GM23248 (cell line): ENCODE measurements at regions of chr11 and their contacts with region 1.

Region 1: DNA sequence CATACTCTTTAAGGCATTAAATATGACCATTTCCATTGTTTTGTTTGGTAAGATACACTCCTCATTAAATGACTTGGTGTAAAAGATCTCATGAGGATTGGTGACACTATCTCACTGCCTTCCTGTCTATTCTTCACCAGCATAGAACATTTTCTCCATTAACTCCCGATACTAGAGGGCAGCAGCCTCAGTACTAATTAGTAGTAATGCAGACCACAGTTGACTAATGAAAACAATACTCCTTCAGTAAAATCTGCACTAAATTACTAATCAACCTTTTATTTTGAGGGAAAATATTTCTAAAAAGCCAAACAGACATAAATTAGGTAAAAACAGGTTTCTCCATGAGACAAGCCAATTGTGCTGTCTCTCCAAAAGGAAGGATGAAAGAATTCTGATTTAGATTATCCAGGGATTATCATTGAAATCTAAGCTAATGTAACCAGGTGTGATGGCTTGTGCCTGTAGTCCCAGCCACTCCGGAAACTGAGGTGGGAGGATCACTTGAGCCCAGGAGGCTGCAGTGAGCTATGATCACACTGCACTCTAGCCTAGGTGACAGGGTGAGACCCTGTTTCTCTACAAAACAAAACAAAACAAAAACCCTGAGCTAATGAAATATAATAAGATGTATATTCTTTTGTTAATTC is 9.4 kb downstream of the PGM2L1 start:
- DNase-seq: peak; percentile 72
- H3K4me3 ChIP-seq: no peak overlapping the region
- H3K27ac ChIP-seq: no peak overlapping the region
- H3K4me1 ChIP-seq: no peaks in the 10 kb centered on the region
- H3K27me3 ChIP-seq: no peaks in the 10 kb centered on the region

Region 2: GRCh38 chr11:73939096-73939495 is 449.7 kb before region 1 on chr11:
- in situ Hi-C with region 1: no loop called
- DNase-seq: peak; percentile 15
- H3K4me3 ChIP-seq: no peak overlapping the region
- H3K27ac ChIP-seq: no peak overlapping the region
- H3K4me1 ChIP-seq: no peaks in the 10 kb centered on the region
- H3K27me3 ChIP-seq: no peaks in the 10 kb centered on the region

Region 3: GRCh38 chr11:74434528-74434927 is 45.7 kb after region 1 on chr11:
- in situ Hi-C with region 1: loop called (anchors 10 kb)
- DNase-seq: no peak
- H3K4me3 ChIP-seq: no peak overlapping the region
- H3K27ac ChIP-seq: no peak overlapping the region
- H3K4me1 ChIP-seq: no peaks in the 10 kb centered on the region
- H3K27me3 ChIP-seq: no peaks in the 10 kb centered on the region